Heart right ventricle (tissue), 16 donors: ENCODE measurements at regions of chr19 and their contacts with region 1.

Region 1: GRCh38 chr19:14091081-14091812 is 696 bp upstream of the SAMD1 start:
- DNase-seq: peak in 1 of 2 donors; percentile 56
- ATAC-seq: peak; percentile 69 to 90 (median 82)
- H3K4me3 ChIP-seq: peak overlapping the region; percentile 73 to 95 (median 80)
- H3K27ac ChIP-seq: peak overlapping the region; percentile 88 to 99 (median 96)
- H3K4me1 ChIP-seq: peaks cover 0 to 19% (median 16%) of the 10 kb centered on the region in 9 donors
- H3K27me3 ChIP-seq: no peaks in the 10 kb centered on the region
- CTCF ChIP-seq: peak in 5 of 9 donors; percentile 19 to 54 (median 46)

Region 2: GRCh38 chr19:14106840-14107239 is 15.6 kb after region 1 on chr19:
- intact Hi-C with region 1: loop called in 1 of 10 experiments (anchors 1 kb)
- DNase-seq: peak in 1 of 2 donors; percentile 53
- ATAC-seq: peak; percentile 54 to 79 (median 68)
- H3K4me3 ChIP-seq: no peak overlapping the region
- H3K27ac ChIP-seq: peak overlapping the region; percentile 69 to 97 (median 90)
- H3K4me1 ChIP-seq: peaks cover 0 to 61% (median 43%) of the 10 kb centered on the region in 9 donors
- H3K27me3 ChIP-seq: no peaks in the 10 kb centered on the region
- CTCF ChIP-seq: peak in 5 of 9 donors; percentile 22 to 41 (median 26)

Region 3: GRCh38 chr19:14117668-14118164 is 26.5 kb after region 1 on chr19 and contains the start of gene PRKACA:
- intact Hi-C with region 1: loop called in 1 of 10 experiments (anchors 2 kb)
- DNase-seq: peak; percentile 98 to 99
- ATAC-seq: peak; percentile 85 to 95 (median 90)
- H3K4me3 ChIP-seq: peak within 1 kb of the TSS; percentile 83 to 96 (median 90)
- H3K27ac ChIP-seq: peak within 1 kb of the TSS; percentile 86 to 100 (median 99)
- H3K4me1 ChIP-seq: peaks cover 38 to 66% (median 62%) of the 10 kb centered on the region in 9 donors
- H3K27me3 ChIP-seq: no peaks in the 10 kb centered on the region
- CTCF ChIP-seq: no peak
- total RNA-seq, gene PRKACA: 473 to 691 (median 518) TPM